ENCODE measurements at regions of chr17 and their contacts with region 1.

Region 1: DNA sequence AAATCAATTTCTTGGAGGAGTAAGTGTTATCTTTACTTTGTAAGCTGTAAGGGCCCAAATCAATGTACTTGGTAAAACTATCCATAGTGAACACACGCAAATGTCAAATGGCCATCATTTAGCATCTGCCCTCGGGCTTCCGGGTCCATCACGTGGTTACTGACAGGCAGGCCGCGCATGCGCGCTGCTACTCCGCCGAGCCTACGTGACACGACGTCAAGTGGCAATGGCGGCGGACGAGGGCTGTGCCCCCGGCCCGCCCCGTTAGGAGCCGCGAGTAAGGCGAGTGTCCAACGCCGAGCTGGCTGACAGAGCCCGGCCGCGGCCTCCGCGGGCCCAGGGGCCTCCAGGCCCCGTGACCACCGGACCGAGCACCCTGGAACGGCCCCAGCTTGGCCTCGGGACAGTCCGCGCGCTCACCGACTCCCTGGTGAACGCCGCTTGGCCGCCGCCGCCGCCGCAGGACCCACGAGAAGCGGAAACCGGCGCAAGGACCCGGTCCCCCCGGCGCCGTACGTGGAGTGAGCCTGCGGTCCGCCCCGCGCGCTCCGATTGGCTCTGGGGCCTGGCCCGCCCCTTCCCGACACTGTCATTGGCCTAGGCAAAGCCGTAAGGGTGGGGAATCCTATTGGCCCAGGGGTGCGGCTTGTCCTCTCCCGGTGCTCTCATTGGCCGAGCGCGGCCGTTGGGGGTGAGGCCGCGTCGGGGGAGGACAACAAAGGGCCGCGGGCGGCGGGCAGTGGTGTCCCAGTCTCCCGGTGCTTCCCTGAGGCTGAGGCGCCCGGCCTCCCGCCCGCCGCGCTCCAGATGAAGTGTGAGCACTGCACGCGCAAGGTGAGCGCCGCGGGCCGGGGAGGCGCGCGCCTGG is at the start of gene NARF:
- DNase-seq: peak; percentile 98
- ATAC-seq: peak; percentile 99
- H3K4me3 Mint-ChIP-seq: peak within 1 kb of the TSS; percentile 79
- H3K27ac Mint-ChIP-seq: peak within 1 kb of the TSS; percentile 99
- H3K4me1 Mint-ChIP-seq: peaks cover 28% of the 10 kb centered on the region
- H3K27me3 Mint-ChIP-seq: no peaks in the 10 kb centered on the region
- total RNA-seq, gene NARF: 65.4 to 85.9 TPM

Region 2: DNA sequence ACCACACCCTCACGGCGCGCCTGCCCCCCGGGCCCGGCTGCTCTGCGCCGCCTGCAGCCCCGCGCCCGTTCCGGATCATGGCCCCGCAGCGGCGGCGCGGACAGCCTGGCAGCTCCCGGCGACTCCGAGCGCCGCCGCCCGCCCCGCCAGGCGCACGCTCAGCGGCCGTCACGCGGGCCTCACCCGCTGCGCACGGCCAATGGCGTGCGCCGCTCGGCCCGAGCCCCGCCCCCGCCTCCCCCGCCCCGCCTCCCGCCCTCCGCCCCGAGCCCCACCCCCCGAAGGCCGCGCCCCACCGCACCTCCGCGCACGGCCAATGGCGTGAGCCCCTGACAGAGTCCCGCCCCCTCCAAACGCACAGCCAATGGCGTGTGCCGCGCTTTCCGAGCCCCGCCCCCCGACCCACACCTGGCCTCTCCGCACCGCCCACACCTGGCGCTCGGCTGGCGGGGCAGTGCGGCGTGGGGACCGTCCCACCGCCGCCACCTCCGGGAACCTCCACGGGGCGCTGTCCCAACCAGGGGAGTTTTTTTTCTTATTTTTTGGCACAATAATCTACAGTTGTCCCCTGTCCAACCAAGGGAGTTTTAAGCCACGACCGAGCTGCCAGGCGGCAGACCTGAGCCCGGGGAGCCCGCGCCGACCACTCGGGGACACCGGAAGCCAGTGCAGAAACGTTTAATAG is 546.8 kb before region 1 on chr17 and contains the start of gene PCYT2:
- CTCF ChIA-PET with region 1: no interaction called
- POLR2A ChIA-PET with region 1: no interaction called
- intact Hi-C with region 1: loop called in 1 of 2 experiments (anchors 10 kb)
- DNase-seq: peak; percentile 97
- ATAC-seq: peak; percentile 96
- H3K4me3 Mint-ChIP-seq: peak within 1 kb of the TSS; percentile 79
- H3K27ac Mint-ChIP-seq: no peak within 1 kb of the TSS
- H3K4me1 Mint-ChIP-seq: peaks cover 14% of the 10 kb centered on the region
- H3K27me3 Mint-ChIP-seq: no peaks in the 10 kb centered on the region
- total RNA-seq, gene PCYT2: 19.7 to 24.0 TPM

Region 3: GRCh38 chr17:82332669-82333278 is 125.5 kb before region 1 on chr17:
- CTCF ChIA-PET with region 1: no interaction called
- POLR2A ChIA-PET with region 1: interaction called, 14 read pairs
- intact Hi-C with region 1: no loop called
- DNase-seq: peak; percentile 57
- ATAC-seq: peak; percentile 28
- H3K4me3 Mint-ChIP-seq: peak overlapping the region; percentile 67
- H3K27ac Mint-ChIP-seq: peak overlapping the region; percentile 60
- H3K4me1 Mint-ChIP-seq: peaks cover 29% of the 10 kb centered on the region
- H3K27me3 Mint-ChIP-seq: peaks cover 4% of the 10 kb centered on the region

Region 4: GRCh38 chr17:82551779-82552457 is 93.7 kb after region 1 on chr17:
- CTCF ChIA-PET with region 1: interaction called, 4 read pairs
- POLR2A ChIA-PET with region 1: no interaction called
- intact Hi-C with region 1: loop called in 1 of 2 experiments (anchors 5 kb)
- DNase-seq: peak; percentile 90
- ATAC-seq: peak; percentile 100
- H3K4me3 Mint-ChIP-seq: no peak overlapping the region
- H3K27ac Mint-ChIP-seq: peak overlapping the region; percentile 56
- H3K4me1 Mint-ChIP-seq: peaks cover 41% of the 10 kb centered on the region
- H3K27me3 Mint-ChIP-seq: no peaks in the 10 kb centered on the region

Region 5: DNA sequence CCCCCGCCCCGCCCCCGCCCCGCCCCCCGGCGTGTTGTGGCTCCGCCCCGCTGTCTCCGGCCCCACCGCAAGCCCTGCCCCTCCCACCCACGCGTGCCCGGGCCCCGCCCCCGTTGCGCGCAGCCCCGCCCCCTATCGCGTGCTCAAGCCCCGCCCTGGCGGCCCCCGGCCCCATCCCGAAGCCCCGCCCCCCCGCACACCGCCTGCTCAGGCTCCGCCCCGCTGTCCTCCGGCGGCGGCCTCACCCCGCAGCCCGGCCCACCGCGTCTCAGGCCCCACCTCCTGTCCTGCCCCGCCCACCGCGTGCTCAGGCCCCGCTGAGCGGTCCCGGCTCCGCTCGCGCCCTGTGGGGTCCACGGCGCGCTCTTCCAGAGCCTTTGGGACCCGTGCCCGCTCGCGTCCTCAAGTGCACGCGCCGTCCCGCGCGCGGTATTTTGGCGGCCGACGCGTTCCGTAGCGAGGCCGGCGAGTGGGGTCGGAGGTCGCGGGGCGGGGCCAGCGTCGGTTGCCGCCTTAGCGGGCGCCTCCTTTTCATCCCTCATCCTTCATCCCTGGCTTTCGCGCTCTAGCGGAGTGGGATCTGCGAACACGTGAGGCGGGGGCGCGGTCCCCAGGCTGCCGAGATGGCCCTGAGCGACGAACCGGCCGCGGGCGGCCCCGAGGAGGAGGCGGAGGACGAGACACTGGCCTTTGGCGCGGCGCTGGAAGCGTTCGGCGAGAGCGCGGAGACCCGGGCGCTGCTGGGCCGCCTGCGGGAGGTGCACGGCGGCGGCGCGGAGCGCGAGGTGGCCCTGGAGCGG is 293.5 kb after region 1 on chr17 and contains the start of gene TBCD:
- CTCF ChIA-PET with region 1: no interaction called
- POLR2A ChIA-PET with region 1: no interaction called
- intact Hi-C with region 1: loop called in 1 of 2 experiments (anchors 1 kb)
- DNase-seq: peak; percentile 95
- ATAC-seq: peak; percentile 83
- H3K4me3 Mint-ChIP-seq: peak within 1 kb of the TSS; percentile 84
- H3K27ac Mint-ChIP-seq: peak within 1 kb of the TSS; percentile 13
- H3K4me1 Mint-ChIP-seq: peaks cover 26% of the 10 kb centered on the region
- H3K27me3 Mint-ChIP-seq: no peaks in the 10 kb centered on the region
- total RNA-seq, gene TBCD: 83.3 to 97.2 TPM